Naive thymus-derived CD4-positive, alpha-beta T cell (primary cell): ENCODE measurements at regions of chr6 and their contacts with region 1.

Region 1: DNA sequence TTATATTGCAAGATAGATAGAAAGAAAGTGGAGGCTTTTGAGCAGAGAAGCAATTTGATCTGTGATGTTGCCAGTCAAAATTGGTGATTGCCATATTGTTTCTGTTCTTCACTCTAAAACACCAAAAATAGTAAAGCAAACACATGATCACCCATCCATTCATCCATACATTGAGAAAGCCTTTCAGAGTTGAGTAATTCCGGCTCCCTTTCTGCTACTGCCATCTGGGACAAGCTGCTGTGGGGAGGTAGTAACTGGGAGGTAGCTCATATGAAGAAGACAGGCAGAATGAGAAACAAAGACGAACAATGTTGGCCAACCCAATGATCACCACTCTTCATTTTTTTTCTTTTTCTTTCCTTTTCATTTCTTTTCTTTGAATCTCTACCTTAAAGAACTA is 51.1 kb upstream of the HBS1L start:
- DNase-seq: no peak
- ATAC-seq: no peak
- H3K4me3 ChIP-seq: no peak overlapping the region
- H3K4me3 Mint-ChIP-seq: peak overlapping the region in 2 of 10 donors; percentile 8 to 83
- H3K27ac ChIP-seq: no peak overlapping the region
- H3K27ac Mint-ChIP-seq: peak overlapping the region in 8 of 9 donors; percentile 77 to 97 (median 90)
- H3K4me1 ChIP-seq: peaks cover 28 to 45% of the 10 kb centered on the region in 2 donors
- H3K4me1 Mint-ChIP-seq: peaks cover 31 to 83% (median 73%) of the 10 kb centered on the region in 7 donors
- H3K27me3 ChIP-seq: no peaks in the 10 kb centered on the region
- H3K27me3 Mint-ChIP-seq: no peaks in the 10 kb centered on the region

Region 2: GRCh38 chr6:135094403-135094848 is 11.3 kb before region 1 on chr6:
- CTCF ChIA-PET with region 1: interaction called, 4 read pairs
- POLR2A ChIA-PET with region 1: interaction called, 149 read pairs
- intact Hi-C with region 1: loop called (anchors 1 kb)
- DNase-seq: peak in 6 of 9 donors; percentile 57 to 75 (median 64)
- ATAC-seq: peak; percentile 88
- H3K4me3 ChIP-seq: no peak overlapping the region
- H3K4me3 Mint-ChIP-seq: peak overlapping the region; percentile 3 to 70 (median 54)
- H3K27ac ChIP-seq: peak overlapping the region; percentile 56
- H3K27ac Mint-ChIP-seq: peak overlapping the region; percentile 80 to 98 (median 90)
- H3K4me1 ChIP-seq: peaks cover 17 to 41% of the 10 kb centered on the region in 2 donors
- H3K4me1 Mint-ChIP-seq: peaks cover 19 to 95% (median 79%) of the 10 kb centered on the region in 7 donors
- H3K27me3 ChIP-seq: no peaks in the 10 kb centered on the region
- H3K27me3 Mint-ChIP-seq: no peaks in the 10 kb centered on the region

Region 3: DNA sequence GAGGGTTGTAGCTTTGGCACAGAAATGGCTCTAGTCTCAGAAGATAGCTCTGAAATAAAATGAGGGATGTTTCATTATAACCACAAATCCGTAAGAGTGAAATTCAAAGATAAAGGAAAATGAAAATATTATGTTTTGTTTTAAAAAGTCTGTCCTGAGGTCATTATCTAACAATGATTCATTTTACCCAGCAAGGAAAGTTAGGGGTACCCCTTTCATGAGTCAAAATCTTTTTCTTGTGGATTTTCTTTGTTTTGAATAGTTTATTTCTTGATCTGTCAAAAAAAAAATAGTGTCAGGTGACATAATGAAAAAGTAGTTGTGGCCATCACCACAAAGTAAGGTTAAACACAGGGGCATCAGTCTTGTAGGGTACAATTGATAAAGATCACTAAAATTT is 15.7 kb after region 1 on chr6:
- CTCF ChIA-PET with region 1: interaction called, 4 read pairs
- POLR2A ChIA-PET with region 1: interaction called, 10 read pairs
- intact Hi-C with region 1: loop called in 1 of 2 experiments (anchors 1 kb)
- DNase-seq: no peak
- ATAC-seq: no peak
- H3K4me3 ChIP-seq: no peak overlapping the region
- H3K4me3 Mint-ChIP-seq: no peak overlapping the region
- H3K27ac ChIP-seq: no peak overlapping the region
- H3K27ac Mint-ChIP-seq: peak overlapping the region in 2 of 9 donors; percentile 74 to 84
- H3K4me1 ChIP-seq: peaks cover 12 to 20% of the 10 kb centered on the region in 2 donors
- H3K4me1 Mint-ChIP-seq: peaks cover 22 to 62% (median 51%) of the 10 kb centered on the region in 7 donors
- H3K27me3 ChIP-seq: no peaks in the 10 kb centered on the region
- H3K27me3 Mint-ChIP-seq: peaks cover 0 to 7% (median 0%) of the 10 kb centered on the region in 5 donors

Region 4: DNA sequence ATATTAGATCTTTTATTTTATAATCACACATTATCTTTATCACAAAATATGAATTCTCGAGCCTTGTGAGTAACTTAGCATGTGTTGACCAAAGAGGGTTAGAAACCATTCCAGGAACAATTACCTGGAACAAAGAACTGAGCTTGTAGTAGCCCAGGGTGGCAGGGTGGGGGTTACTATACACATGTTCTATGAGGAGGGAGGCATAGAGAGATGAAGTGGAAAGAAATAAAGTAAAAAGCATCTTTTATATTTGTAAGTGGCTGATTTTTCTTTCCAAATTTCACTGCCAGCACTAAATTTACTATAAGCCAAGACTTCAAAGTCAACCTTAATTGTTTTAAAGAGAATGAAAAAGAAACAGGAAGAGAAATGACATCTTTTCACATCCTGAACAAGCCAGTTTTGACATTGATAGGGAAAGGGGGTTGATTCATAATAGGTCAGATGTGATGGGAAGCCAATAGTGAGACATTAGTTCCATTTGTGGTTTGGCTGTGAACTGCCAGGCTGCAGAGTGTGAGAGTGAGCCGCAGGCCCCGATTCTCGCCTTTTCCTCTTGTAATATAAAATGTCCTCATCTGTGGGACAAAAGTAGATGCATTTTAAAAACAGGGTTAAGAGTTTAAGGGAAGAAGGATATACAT is 22.7 kb after region 1 on chr6:
- CTCF ChIA-PET with region 1: interaction called, 4 read pairs
- POLR2A ChIA-PET with region 1: interaction called, 16 read pairs
- intact Hi-C with region 1: loop called in 1 of 2 experiments (anchors 1 kb)
- DNase-seq: peak in 8 of 9 donors; percentile 53 to 73 (median 66)
- ATAC-seq: peak; percentile 92
- H3K4me3 ChIP-seq: peak overlapping the region; percentile 36
- H3K4me3 Mint-ChIP-seq: peak overlapping the region; percentile 46 to 93 (median 77)
- H3K27ac ChIP-seq: peak overlapping the region; percentile 75
- H3K27ac Mint-ChIP-seq: peak overlapping the region; percentile 95 to 98 (median 97)
- H3K4me1 ChIP-seq: peaks cover 18 to 22% of the 10 kb centered on the region in 2 donors
- H3K4me1 Mint-ChIP-seq: peaks cover 26 to 64% (median 55%) of the 10 kb centered on the region in 7 donors
- H3K27me3 ChIP-seq: no peaks in the 10 kb centered on the region
- H3K27me3 Mint-ChIP-seq: no peaks in the 10 kb centered on the region

Region 5: GRCh38 chr6:135212020-135212806 is 106.5 kb after region 1 on chr6:
- CTCF ChIA-PET with region 1: no interaction called
- POLR2A ChIA-PET with region 1: no interaction called
- intact Hi-C with region 1: no loop called
- DNase-seq: no peak
- ATAC-seq: no peak
- H3K4me3 ChIP-seq: peak overlapping the region; percentile 2
- H3K4me3 Mint-ChIP-seq: peak overlapping the region; percentile 5 to 82 (median 66)
- H3K27ac ChIP-seq: no peak overlapping the region
- H3K27ac Mint-ChIP-seq: peak overlapping the region; percentile 9 to 88 (median 69)
- H3K4me1 ChIP-seq: peaks cover 0 to 26% of the 10 kb centered on the region in 2 donors
- H3K4me1 Mint-ChIP-seq: peaks cover 20 to 48% (median 41%) of the 10 kb centered on the region in 7 donors
- H3K27me3 ChIP-seq: no peaks in the 10 kb centered on the region
- H3K27me3 Mint-ChIP-seq: no peaks in the 10 kb centered on the region